ENCODE measurements at regions of chr9 and their contacts with region 1.

Region 1: DNA sequence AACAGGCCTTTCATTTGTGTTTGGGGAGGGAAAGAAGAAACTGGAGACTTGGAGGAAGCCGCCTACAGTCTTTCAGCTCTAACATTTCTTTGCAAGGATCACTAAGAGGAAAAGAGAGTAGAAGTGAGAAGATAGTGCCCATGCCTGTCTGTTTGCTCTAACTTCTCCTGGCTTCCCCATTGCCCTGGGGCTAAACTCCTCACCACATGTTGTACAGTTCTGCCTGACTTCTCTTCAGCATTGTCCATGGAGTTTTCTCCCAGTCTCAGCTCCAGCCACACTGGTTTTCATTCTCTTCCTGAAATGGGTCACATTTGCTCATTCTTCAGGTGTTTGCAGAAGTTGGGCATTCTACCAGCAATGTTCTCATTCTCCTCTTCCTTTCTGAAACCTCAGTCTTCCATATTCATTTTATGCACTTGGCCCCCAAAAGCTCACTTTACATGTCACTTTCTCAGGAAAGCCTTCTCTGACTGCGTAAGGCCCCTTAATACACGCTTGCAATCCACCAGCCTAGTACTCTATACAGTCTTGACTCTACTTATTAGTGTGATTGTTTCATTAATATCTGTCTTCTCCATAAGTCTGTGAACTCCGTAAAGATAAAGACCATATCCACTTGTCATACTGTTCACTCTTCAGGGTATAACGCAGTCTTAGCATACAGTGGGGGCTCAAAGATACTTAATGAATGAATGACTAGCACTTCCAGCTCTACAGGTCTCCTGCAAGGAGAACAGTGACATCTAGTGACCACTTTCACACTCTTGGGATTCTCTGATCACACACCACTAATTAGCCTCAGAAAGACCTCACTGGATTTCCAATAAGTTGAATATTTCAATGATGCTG is 40.2 kb upstream of the TRIM32 start:
- DNase-seq: no peak

Region 2: GRCh38 chr9:115837618-115838017 is 809.3 kb before region 1 on chr9:
- intact Hi-C with region 1: no loop called
- DNase-seq: no peak

Region 3: GRCh38 chr9:116494815-116495634 is 151.9 kb before region 1 on chr9:
- intact Hi-C with region 1: loop called (anchors 5 kb)
- DNase-seq: no peak

Region 4: DNA sequence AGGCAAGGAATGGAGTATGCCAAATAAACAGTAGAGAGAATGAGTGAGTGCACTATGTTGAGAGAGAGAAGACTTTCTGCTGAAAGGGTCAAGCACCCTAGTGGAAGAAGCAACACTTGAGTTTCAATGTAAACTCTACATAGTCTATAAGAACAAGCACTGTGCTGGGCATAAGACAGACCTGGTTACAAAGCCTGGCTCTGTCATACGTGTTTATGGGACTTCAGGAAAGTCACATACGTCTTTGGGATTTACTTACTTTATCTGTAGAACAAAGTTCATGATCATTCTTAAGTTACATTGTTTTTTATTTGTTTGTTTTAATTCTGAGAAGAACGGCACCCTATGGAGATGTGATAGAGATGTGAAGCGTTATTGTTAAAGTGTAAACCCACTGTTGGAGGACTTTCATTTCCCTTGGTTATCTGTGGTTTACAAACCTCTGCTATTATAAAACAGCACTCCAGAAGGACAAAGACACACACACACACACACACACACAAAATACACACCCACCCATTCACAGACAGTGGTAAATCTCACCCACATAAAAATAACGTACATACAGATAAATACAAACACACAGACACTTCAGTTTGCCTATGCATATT is 30.5 kb before region 1 on chr9:
- intact Hi-C with region 1: no loop called
- DNase-seq: no peak